Activated CD4-positive, alpha-beta T cell treated with anti-CD3 and anti-CD28 coated beads, Interleukin-2, amount 10 ng/mL, durations not matched to agents 7 days and 5 days (primary cell): ENCODE measurements at regions of chr6 and their contacts with region 1.

Region 1: DNA sequence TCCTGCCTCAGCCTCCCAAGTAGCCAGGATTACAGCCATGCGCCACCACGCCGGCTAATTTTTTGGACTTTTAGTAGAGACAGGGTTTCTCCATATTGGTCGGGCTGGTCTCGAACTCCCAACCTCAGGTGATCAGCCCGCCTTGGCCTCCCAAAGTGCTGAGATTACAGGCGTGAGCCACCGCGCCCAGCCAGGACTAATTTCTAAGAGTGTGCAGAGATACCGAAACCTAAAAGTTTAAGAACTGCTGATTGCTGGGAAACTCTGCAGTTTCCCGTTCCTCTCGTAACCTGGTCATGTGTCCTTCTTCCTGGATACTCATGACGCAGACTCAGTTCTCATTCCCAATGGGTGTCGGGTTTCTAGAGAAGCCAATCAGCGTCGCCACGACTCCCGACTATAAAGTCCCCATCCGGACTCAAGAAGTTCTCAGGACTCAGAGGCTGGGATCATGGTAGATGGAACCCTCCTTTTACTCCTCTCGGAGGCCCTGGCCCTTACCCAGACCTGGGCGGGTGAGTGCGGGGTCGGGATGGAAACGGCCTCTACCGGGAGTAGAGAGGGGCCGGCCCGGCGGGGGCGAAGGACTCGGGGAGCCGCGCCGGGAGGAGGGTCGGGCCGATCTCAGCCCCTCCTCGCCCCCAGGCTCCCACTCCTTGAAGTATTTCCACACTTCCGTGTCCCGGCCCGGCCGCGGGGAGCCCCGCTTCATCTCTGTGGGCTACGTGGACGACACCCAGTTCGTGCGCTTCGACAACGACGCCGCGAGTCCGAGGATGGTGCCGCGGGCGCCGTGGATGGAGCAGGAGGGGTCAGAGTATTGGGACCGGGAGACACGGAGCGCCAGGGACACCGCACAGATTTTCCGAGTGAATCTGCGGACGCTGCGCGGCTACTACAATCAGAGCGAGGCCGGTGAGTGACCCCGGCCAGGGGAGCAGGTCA is at the start of gene HLA-E:
- DNase-seq: peak; percentile 97
- H3K4me3 Mint-ChIP-seq: peak within 1 kb of the TSS; percentile 100
- H3K27ac Mint-ChIP-seq: peak within 1 kb of the TSS; percentile 96
- H3K4me1 Mint-ChIP-seq: peaks cover 51% of the 10 kb centered on the region
- H3K27me3 Mint-ChIP-seq: no peaks in the 10 kb centered on the region
- total RNA-seq, gene HLA-E: 706 to 753 TPM

Region 2: GRCh38 chr6:30515932-30516753 is 26.8 kb after region 1 on chr6:
- CTCF ChIA-PET with region 1: interaction called, 6 read pairs
- POLR2A ChIA-PET with region 1: interaction called, 19 read pairs
- DNase-seq: peak; percentile 95
- H3K4me3 Mint-ChIP-seq: peak overlapping the region; percentile 84
- H3K27ac Mint-ChIP-seq: peak overlapping the region; percentile 99
- H3K4me1 Mint-ChIP-seq: peaks cover 53% of the 10 kb centered on the region
- H3K27me3 Mint-ChIP-seq: no peaks in the 10 kb centered on the region